ENCODE measurements at regions of chr6 and their contacts with region 1.

Region 1: DNA sequence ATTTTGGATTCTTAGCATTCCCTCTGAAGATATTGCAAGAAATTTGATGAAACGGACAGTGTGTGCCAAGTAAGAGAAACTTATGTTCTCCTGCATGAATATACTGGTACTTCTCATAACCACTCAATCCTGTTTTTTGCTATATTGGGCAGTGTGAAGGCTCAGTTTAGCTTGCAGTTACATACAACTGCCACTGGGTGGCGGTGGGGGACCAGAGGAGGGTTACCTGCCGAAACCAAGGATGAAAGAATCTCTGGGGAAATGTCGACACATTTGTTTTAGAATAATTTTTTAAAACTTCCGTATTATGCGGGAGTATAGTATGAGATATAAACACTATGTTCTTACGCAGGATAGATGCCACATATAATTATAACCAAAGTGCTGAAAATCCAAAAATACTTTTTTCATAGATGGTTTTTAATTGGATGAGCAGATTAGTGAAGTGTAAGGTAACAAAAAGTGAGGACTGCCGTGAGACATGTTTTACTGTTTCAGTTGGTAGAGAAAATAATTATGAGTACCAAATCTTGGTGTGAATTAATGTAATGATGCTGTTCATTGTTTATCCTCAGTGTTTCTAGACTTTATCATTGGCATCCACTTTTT is 9.7 kb downstream of the TRMT11 start:
- DNase-seq: peak; percentile 60 to 88
- ATAC-seq: peak; percentile 96 to 100 (median 99)
- H3K4me3 ChIP-seq: no peak overlapping the region
- H3K4me3 Mint-ChIP-seq: peak overlapping the region; percentile 53
- H3K27ac ChIP-seq: no peak overlapping the region
- H3K27ac Mint-ChIP-seq: no peak overlapping the region
- H3K4me1 ChIP-seq: no peaks in the 10 kb centered on the region
- H3K4me1 Mint-ChIP-seq: peaks cover 4 to 5% of the 10 kb centered on the region in 2 donors
- H3K27me3 ChIP-seq: no peaks in the 10 kb centered on the region
- H3K27me3 Mint-ChIP-seq: no peaks in the 10 kb centered on the region
- CTCF ChIP-seq: peak; percentile 99

Region 2: DNA sequence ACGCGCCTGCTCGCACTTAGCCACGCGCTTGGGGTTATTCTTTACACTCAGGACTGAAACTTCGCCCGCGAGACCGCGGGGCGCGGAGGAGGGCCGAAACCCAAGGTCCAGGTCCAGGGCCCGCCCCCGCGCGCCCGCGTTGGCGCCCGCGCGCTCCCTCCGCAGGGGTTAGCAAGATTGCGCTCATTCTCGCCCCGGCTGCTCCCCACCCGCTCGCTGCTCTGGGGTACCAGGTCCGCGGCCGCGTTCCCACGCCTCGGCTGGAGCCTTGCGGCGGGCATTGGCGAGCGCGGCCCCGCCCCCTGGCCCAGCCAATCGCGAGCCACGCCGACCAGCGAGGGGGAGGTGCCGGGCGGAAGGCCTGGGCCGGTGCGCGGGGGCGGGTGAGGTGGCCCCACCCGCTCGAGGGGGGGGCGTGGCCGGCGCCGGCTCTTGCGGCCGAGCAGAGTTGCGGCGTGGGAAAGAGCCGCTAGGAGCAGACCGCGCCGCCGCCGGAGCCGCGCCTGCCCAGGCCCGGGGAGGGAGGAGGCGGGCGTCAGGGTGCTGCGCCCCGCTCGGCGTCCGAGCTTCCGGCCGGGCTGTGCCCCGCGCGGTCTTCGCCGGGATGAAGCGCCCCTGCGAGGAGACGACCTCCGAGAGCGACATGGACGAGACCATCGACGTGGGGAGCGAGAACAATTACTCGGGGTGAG is 246.8 kb before region 1 on chr6 and contains the start of gene HEY2:
- intact Hi-C with region 1: no loop called
- DNase-seq: peak; percentile 85 to 89
- ATAC-seq: peak; percentile 81 to 93 (median 85)
- H3K4me3 ChIP-seq: peak within 1 kb of the TSS; percentile 76
- H3K4me3 Mint-ChIP-seq: peak within 1 kb of the TSS; percentile 94
- H3K27ac ChIP-seq: peak within 1 kb of the TSS; percentile 34
- H3K27ac Mint-ChIP-seq: peak within 1 kb of the TSS; percentile 83 to 89
- H3K4me1 ChIP-seq: peaks cover 29% of the 10 kb centered on the region
- H3K4me1 Mint-ChIP-seq: peaks cover 32 to 35% of the 10 kb centered on the region in 2 donors
- H3K27me3 ChIP-seq: peaks cover 52% of the 10 kb centered on the region
- H3K27me3 Mint-ChIP-seq: peaks cover 13 to 24% of the 10 kb centered on the region in 2 donors
- CTCF ChIP-seq: no peak
- total RNA-seq, gene HEY2: 0.66 to 0.93 (median 0.73) TPM

Region 3: GRCh38 chr6:126170978-126171382 is 174.9 kb after region 1 on chr6:
- intact Hi-C with region 1: loop called (anchors 2 kb)
- DNase-seq: peak in 1 of 2 donors; percentile 52
- ATAC-seq: peak in 2 of 3 donors; percentile 58 to 59
- H3K4me3 ChIP-seq: no peak overlapping the region
- H3K4me3 Mint-ChIP-seq: peak overlapping the region; percentile 63
- H3K27ac ChIP-seq: no peak overlapping the region
- H3K27ac Mint-ChIP-seq: peak overlapping the region in 1 of 2 donors; percentile 36
- H3K4me1 ChIP-seq: no peaks in the 10 kb centered on the region
- H3K4me1 Mint-ChIP-seq: peaks cover 5 to 11% of the 10 kb centered on the region in 2 donors
- H3K27me3 ChIP-seq: no peaks in the 10 kb centered on the region
- H3K27me3 Mint-ChIP-seq: peaks cover 0 to 2% of the 10 kb centered on the region in 2 donors
- CTCF ChIP-seq: peak; percentile 25

Region 4: DNA sequence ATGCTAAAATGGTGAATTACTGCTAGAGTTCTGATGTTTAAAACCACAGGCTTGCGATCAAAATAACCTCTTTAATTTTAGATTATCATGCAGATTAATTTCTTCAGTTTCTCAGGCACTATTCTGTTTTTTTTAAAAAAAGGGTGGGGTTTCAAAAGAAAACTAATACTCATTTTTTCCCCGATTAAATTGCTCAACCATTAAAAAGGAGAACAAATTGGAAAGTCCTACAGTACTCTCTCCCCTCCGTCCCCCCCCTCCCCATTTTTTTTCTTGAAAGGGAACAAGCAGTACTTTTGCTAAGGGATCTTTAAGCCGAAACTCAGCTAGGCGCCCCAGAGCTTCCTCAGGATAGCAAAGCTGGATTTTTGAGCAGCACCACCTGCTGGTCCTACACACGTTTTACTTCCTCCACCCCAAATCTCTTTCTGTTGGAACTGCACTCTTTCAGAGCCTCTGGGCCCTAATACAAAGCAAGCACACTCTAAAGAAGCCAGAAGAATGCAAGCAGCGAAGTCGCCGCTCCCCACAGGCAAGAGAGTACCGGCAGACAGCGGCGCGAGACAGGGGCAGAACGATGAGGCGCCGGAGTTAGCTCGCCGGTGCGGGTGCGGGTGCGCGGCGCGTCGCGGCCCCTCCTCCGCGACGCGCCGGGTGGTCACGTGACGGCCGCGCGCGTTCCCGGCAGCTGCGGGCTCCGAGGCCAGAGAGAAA is 1270.3 kb after region 1 on chr6 and contains the start of gene RNF146:
- intact Hi-C with region 1: loop called (anchors 5 kb)
- DNase-seq: peak; percentile 78 to 85
- ATAC-seq: peak; percentile 75 to 88 (median 83)
- H3K4me3 ChIP-seq: peak within 1 kb of the TSS; percentile 95
- H3K4me3 Mint-ChIP-seq: peak within 1 kb of the TSS; percentile 99
- H3K27ac ChIP-seq: peak within 1 kb of the TSS; percentile 98
- H3K27ac Mint-ChIP-seq: peak within 1 kb of the TSS; percentile 96
- H3K4me1 ChIP-seq: no peaks in the 10 kb centered on the region
- H3K4me1 Mint-ChIP-seq: peaks cover 34 to 42% of the 10 kb centered on the region in 2 donors
- H3K27me3 ChIP-seq: no peaks in the 10 kb centered on the region
- H3K27me3 Mint-ChIP-seq: peaks cover 0 to 4% of the 10 kb centered on the region in 2 donors
- CTCF ChIP-seq: peak; percentile 69
- total RNA-seq, gene RNF146: 23.0 to 34.8 (median 25.4) TPM